ENCODE measurements at regions of chr6 and their contacts with region 1.

Region 1: DNA sequence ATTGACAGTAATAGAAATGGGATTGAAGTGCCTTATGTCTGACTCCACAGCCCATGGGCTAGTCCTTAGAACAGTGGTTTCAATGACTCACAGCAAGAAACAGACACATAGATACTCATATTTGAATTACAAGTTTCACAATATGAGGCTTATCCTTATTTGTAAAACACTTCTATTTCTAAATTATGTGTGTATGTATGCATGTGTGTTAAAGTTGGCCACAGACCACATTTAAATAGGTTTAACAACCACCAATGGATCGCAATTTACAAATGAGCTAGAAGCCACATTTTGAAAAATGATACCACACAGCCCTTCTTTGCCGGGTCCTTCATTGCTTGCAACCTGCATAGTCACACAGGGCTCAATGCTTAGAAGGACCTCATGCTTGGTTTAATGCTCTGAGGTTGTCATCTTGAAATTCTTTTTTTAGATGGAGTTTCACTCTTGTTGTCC is 157.8 kb upstream of the PREP start:
- DNase-seq: peak; percentile 70
- ATAC-seq: peak; percentile 96
- H3K4me3 ChIP-seq: no peak overlapping the region
- H3K27ac ChIP-seq: peak overlapping the region; percentile 18; the same call in 1 of the 2 replicates
- H3K4me1 ChIP-seq: peaks cover 19% of the 10 kb centered on the region
- H3K27me3 ChIP-seq: no peaks in the 10 kb centered on the region; a peak in 1 of 4 replicates
- CTCF ChIP-seq: no peak
- EP300 ChIP-seq: peak in 1 of 2 experiments; percentile 70; a peak in 2 of 4 replicates
- POLR2A ChIP-seq: no peak
- RAD21 ChIP-seq: no peak

Region 2: DNA sequence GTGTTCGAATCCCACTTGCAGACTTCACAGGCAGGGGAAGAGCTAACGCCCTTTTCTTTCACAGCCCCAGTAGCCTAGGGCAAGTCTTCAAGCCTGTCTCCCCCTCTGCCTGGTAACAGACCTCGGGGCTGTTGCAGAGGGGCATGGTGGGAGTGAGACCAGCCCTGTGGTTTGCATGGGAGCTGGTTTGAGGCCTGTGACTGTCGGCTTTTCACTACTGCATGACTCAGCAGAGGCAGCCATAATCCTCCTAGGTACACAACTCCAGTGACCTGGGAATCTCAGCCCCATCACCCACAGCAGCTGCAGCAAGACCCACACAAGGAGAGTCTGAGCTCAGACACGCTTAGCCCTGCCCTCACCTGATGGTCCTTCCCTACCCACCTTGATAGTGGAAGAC is 325.5 kb before region 1 on chr6:
- CTCF ChIA-PET with region 1: no interaction called
- POLR2A ChIA-PET with region 1: no interaction called
- RAD21 ChIA-PET with region 1: no interaction called
- SMC1A ChIA-PET with region 1: no interaction called
- in situ Hi-C with region 1: no loop called
- intact Hi-C with region 1: no loop called
- DNase-seq: no peak
- ATAC-seq: no peak
- H3K4me3 ChIP-seq: no peak overlapping the region
- H3K27ac ChIP-seq: no peak overlapping the region
- H3K4me1 ChIP-seq: no peaks in the 10 kb centered on the region
- H3K27me3 ChIP-seq: no peaks in the 10 kb centered on the region
- CTCF ChIP-seq: no peak
- EP300 ChIP-seq: no peak
- POLR2A ChIP-seq: no peak
- RAD21 ChIP-seq: no peak

Region 3: DNA sequence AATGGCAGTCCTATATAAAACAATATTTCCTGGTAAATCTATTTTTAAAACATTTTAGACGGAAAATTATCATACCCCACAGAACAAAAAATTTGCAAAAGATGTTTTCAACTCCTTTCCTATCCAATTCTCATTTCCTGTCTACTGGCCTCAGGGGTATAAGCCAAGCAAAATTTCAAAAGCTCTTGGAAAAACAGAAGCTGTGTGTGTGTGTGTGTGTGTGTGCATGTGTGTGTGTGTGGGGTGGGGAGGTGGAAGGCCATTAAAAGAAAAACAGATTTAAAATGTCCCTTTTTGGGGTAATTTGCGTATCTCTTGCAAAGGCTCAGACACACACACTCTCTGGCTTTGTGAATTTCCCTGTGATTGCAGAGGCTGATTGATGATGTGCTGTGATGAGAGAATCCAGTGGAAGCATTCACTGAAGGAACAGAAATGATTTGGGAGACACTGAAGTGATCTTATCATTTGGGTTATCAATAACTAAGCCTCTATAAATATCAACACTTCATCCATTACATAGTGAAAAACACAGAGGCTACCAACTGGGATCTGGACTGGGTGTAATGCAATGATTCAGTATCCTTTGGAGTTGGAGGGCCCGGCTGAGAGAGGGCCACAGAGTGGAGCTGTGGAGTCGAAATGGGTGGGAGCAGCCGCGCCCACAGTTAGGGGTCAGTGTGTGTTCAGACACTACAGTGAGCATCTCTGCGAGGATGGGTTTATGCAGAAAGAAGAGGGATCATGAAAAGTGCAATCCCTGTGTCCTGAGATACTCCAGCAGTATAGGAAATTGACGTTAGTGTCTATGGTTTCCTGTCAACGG is 50.9 kb before region 1 on chr6:
- CTCF ChIA-PET with region 1: no interaction called
- POLR2A ChIA-PET with region 1: no interaction called
- RAD21 ChIA-PET with region 1: no interaction called
- SMC1A ChIA-PET with region 1: no interaction called
- in situ Hi-C with region 1: no loop called
- intact Hi-C with region 1: no loop called
- DNase-seq: no peak
- ATAC-seq: peak; percentile 27; the same call in 1 of the 3 replicates
- H3K4me3 ChIP-seq: no peak overlapping the region
- H3K27ac ChIP-seq: no peak overlapping the region
- H3K4me1 ChIP-seq: no peaks in the 10 kb centered on the region
- H3K27me3 ChIP-seq: no peaks in the 10 kb centered on the region; a peak in 1 of 4 replicates
- CTCF ChIP-seq: no peak
- EP300 ChIP-seq: no peak
- POLR2A ChIP-seq: no peak
- RAD21 ChIP-seq: no peak

Region 4: GRCh38 chr6:105545947-105546731 is 14.5 kb before region 1 on chr6:
- CTCF ChIA-PET with region 1: interaction called, 5 read pairs
- POLR2A ChIA-PET with region 1: no interaction called
- RAD21 ChIA-PET with region 1: interaction called, 3 read pairs
- SMC1A ChIA-PET with region 1: interaction called, 11 read pairs
- in situ Hi-C with region 1: no loop called
- intact Hi-C with region 1: no loop called
- DNase-seq: no peak
- ATAC-seq: no peak
- H3K4me3 ChIP-seq: no peak overlapping the region
- H3K27ac ChIP-seq: no peak overlapping the region
- H3K4me1 ChIP-seq: no peaks in the 10 kb centered on the region
- H3K27me3 ChIP-seq: no peaks in the 10 kb centered on the region
- CTCF ChIP-seq: no peak
- EP300 ChIP-seq: no peak
- POLR2A ChIP-seq: no peak
- RAD21 ChIP-seq: no peak

Region 5: GRCh38 chr6:105949869-105950268 is 389.2 kb after region 1 on chr6:
- CTCF ChIA-PET with region 1: no interaction called
- POLR2A ChIA-PET with region 1: no interaction called
- RAD21 ChIA-PET with region 1: no interaction called
- SMC1A ChIA-PET with region 1: no interaction called
- in situ Hi-C with region 1: no loop called
- intact Hi-C with region 1: no loop called
- DNase-seq: no peak
- ATAC-seq: no peak
- H3K4me3 ChIP-seq: no peak overlapping the region
- H3K27ac ChIP-seq: no peak overlapping the region
- H3K4me1 ChIP-seq: no peaks in the 10 kb centered on the region
- H3K27me3 ChIP-seq: peaks cover 0 to 3% of the 10 kb centered on the region in 2 experiments; a peak in 1 of 4 replicates
- CTCF ChIP-seq: no peak
- EP300 ChIP-seq: no peak
- POLR2A ChIP-seq: no peak
- RAD21 ChIP-seq: no peak

Region 6: GRCh38 chr6:107009499-107009898 is 1448.9 kb after region 1 on chr6:
- CTCF ChIA-PET with region 1: no interaction called
- POLR2A ChIA-PET with region 1: no interaction called
- RAD21 ChIA-PET with region 1: no interaction called
- SMC1A ChIA-PET with region 1: no interaction called
- in situ Hi-C with region 1: no loop called
- intact Hi-C with region 1: no loop called
- DNase-seq: no peak
- ATAC-seq: no peak
- H3K4me3 ChIP-seq: no peak overlapping the region
- H3K27ac ChIP-seq: no peak overlapping the region
- H3K4me1 ChIP-seq: no peaks in the 10 kb centered on the region
- H3K27me3 ChIP-seq: no peaks in the 10 kb centered on the region
- CTCF ChIP-seq: no peak
- EP300 ChIP-seq: no peak
- POLR2A ChIP-seq: no peak
- RAD21 ChIP-seq: no peak

Measured in GM12878 (cell line).